Naive thymus-derived CD4-positive, alpha-beta T cell (primary cell): ENCODE measurements at regions of chr9 and their contacts with region 1.

Region 1: DNA sequence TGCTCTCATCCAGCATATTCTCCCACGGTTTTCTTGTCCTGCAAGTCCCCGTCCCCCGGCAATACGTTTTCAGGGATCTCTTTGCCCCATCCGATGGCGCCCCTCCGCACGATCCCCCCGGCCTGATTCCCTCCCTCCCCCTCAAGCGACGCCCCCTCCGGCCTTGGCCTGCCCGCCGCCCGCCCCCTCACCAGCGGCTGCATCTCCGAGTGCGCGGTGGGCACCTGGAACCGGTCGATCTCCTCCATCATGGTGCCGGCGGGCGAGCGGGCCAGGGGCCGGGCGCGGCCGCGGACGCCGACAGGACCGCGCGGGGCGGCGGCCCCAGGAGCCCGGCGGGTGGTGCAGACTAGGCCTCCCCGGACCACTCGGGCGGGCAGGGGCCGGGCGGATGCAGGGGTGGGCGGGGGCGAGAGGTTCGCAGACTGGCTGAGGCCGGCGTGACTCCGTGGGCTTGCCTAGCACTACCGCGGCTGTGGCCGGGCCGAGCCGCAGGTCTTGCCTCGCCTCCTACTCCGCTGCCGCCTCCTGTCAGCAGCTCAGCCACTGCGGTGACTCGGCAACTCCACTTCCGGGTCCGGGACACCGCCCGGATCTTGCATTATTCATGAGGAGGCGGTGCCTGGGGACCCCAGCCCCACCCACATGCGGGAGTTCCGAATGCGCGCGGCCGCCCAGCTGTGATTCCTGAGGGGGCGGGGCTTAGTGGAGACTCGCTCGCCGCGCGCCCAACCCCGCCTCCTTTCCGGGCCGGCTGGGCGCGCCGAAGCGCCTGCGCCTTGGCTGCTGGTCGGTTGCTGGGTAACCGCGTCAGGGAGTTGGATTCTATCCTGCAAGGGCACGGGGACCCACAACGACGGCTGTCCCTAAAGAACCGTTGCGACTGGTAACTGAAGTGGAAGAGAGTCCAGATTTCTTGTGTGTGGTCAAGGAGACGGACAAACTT is at the starts of genes DNAI1 and FAM219A:
- DNase-seq: peak; percentile 97 to 100 (median 99)
- ATAC-seq: peak; percentile 98
- H3K4me3 ChIP-seq: peak within 1 kb of the TSS; percentile 68
- H3K4me3 Mint-ChIP-seq: peak within 1 kb of the TSS; percentile 86 to 93 (median 92)
- H3K27ac ChIP-seq: peak within 1 kb of the TSS; percentile 41
- H3K27ac Mint-ChIP-seq: peak within 1 kb of the TSS; percentile 57 to 93 (median 82)
- H3K4me1 ChIP-seq: peaks cover 13 to 16% of the 10 kb centered on the region in 2 donors
- H3K4me1 Mint-ChIP-seq: peaks cover 28 to 46% (median 38%) of the 10 kb centered on the region in 7 donors
- H3K27me3 ChIP-seq: no peaks in the 10 kb centered on the region
- H3K27me3 Mint-ChIP-seq: peaks cover 0 to 23% (median 6%) of the 10 kb centered on the region in 5 donors
- total RNA-seq, gene DNAI1: not detected
- total RNA-seq, gene FAM219A: 12.3 to 14.6 (median 13.4) TPM

Region 2: DNA sequence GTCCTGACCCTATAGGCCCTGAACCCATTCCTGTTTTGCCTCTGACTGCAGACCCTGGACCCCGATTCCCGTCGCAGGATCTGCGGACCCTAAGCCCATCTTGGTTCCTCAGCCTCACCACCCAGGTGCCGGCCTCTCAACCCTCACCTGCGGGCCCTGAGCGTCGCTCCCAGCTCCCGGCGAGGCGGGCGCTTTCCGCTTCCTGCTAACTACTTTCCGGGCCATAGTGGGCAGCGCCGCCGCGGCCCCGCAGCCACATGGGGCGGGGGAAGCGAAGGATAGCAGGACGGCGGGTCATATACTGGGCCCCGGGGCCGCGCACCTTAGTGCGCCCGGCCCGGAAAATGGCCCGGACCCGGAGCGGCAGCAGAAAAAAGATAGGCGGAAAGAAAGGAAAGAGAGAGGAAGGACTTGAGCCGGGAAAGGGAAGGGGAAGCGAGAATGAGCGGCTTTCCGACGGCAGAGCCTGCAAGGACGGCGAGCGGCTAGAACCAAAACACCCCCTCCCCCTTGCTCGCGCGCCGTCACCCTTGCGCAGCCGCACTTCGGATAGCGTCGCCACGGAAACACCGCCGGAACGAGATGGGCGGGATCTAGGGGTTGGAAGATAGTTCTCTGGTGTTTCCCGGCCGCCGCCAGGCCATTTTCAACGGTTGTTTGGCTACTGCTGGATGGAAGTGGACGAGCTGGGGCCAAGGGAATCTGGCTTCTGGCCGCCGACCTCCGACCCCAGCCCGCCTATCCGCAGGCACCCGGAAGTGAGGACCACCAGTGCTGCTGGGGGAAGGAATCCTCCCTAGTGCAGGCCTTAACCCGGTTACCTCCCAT is 331.9 kb before region 1 on chr9 and contains the start of gene DCAF12:
- CTCF ChIA-PET with region 1: no interaction called
- POLR2A ChIA-PET with region 1: no interaction called
- intact Hi-C with region 1: loop called in 1 of 2 experiments (anchors 2 kb)
- DNase-seq: peak; percentile 84 to 92 (median 89)
- ATAC-seq: peak; percentile 96
- H3K4me3 ChIP-seq: peak within 1 kb of the TSS; percentile 92
- H3K4me3 Mint-ChIP-seq: peak within 1 kb of the TSS; percentile 92 to 99 (median 98)
- H3K27ac ChIP-seq: peak within 1 kb of the TSS; percentile 93
- H3K27ac Mint-ChIP-seq: peak within 1 kb of the TSS; percentile 94 to 99 (median 98)
- H3K4me1 ChIP-seq: peaks cover 24 to 34% of the 10 kb centered on the region in 2 donors
- H3K4me1 Mint-ChIP-seq: peaks cover 39 to 56% (median 44%) of the 10 kb centered on the region in 7 donors
- H3K27me3 ChIP-seq: no peaks in the 10 kb centered on the region
- H3K27me3 Mint-ChIP-seq: peaks cover 0 to 2% (median 0%) of the 10 kb centered on the region in 5 donors
- total RNA-seq, gene DCAF12: 10.8 to 40.4 (median 28.5) TPM

Region 3: DNA sequence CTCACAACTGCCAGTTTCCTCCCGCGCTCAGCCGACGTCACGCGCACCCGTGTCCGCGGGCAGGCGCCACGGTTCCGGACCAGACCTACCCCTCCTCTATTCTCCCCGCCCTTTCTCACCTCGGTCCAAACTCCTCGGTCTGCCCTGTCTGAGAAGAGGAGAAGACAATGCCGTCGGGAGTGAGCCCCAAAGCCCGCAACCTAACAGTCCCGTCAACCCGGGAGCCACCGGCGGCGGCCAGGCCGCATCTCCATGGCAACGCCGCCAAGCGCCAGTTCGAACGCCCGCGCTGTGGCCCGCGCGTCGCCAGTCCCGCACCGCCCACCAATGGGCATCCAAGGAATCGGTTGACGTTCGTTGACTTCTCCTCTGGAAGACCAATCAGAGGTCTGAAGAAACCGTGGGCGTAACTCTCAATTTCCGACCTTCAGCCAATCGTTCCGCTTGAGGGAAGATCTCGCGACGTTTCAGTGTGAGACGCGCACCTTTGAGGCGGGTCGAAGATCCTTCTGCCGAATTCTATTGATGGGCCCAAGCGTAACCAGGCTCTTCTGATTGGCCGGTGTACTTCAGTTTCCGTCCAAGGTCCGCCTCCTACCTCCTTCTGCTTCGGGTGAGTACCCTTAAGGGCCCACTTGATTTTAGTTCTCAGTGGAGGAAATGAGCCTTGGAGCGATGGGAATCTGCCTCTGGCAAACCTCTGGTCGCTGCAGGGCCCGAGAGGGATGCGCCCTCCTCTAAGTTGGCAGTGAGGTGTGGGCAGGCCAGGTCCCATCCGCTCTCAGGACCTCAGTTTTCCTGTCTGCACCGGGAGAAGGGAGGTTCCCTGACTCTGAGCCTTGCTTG is 129.1 kb before region 1 on chr9 and contains the starts of genes KIF24 and NUDT2:
- CTCF ChIA-PET with region 1: no interaction called
- POLR2A ChIA-PET with region 1: no interaction called
- intact Hi-C with region 1: loop called (anchors 1 kb)
- DNase-seq: peak; percentile 89 to 99 (median 96)
- ATAC-seq: peak; percentile 95
- H3K4me3 ChIP-seq: peak within 1 kb of the TSS; percentile 98
- H3K4me3 Mint-ChIP-seq: peak within 1 kb of the TSS; percentile 88 to 97 (median 94)
- H3K27ac ChIP-seq: peak within 1 kb of the TSS; percentile 94
- H3K27ac Mint-ChIP-seq: peak within 1 kb of the TSS; percentile 77 to 98 (median 95)
- H3K4me1 ChIP-seq: peaks cover 3 to 8% of the 10 kb centered on the region in 2 donors
- H3K4me1 Mint-ChIP-seq: peaks cover 11 to 45% (median 29%) of the 10 kb centered on the region in 7 donors
- H3K27me3 ChIP-seq: no peaks in the 10 kb centered on the region
- H3K27me3 Mint-ChIP-seq: no peaks in the 10 kb centered on the region
- total RNA-seq, gene KIF24: 0.11 to 6.0 (median 0.35) TPM
- total RNA-seq, gene NUDT2: 7.5 to 30.0 (median 22.7) TPM

Region 4: GRCh38 chr9:34396276-34397214 is 61.7 kb before region 1 on chr9:
- CTCF ChIA-PET with region 1: no interaction called
- POLR2A ChIA-PET with region 1: no interaction called
- intact Hi-C with region 1: no loop called
- DNase-seq: no peak
- ATAC-seq: no peak
- H3K4me3 ChIP-seq: no peak overlapping the region
- H3K4me3 Mint-ChIP-seq: no peak overlapping the region
- H3K27ac ChIP-seq: no peak overlapping the region
- H3K27ac Mint-ChIP-seq: no peak overlapping the region
- H3K4me1 ChIP-seq: no peaks in the 10 kb centered on the region
- H3K4me1 Mint-ChIP-seq: no peaks in the 10 kb centered on the region
- H3K27me3 ChIP-seq: no peaks in the 10 kb centered on the region
- H3K27me3 Mint-ChIP-seq: peaks cover 0 to 15% (median 0%) of the 10 kb centered on the region in 5 donors

Region 5: GRCh38 chr9:34437006-34437925 is 21.0 kb before region 1 on chr9:
- CTCF ChIA-PET with region 1: interaction called, 7 read pairs
- POLR2A ChIA-PET with region 1: no interaction called
- intact Hi-C with region 1: loop called in 1 of 2 experiments (anchors 1 kb)
- DNase-seq: peak in 8 of 9 donors; percentile 49 to 74 (median 65)
- ATAC-seq: peak; percentile 92
- H3K4me3 ChIP-seq: no peak overlapping the region
- H3K4me3 Mint-ChIP-seq: no peak overlapping the region
- H3K27ac ChIP-seq: no peak overlapping the region
- H3K27ac Mint-ChIP-seq: no peak overlapping the region
- H3K4me1 ChIP-seq: peaks cover 0 to 6% of the 10 kb centered on the region in 2 donors
- H3K4me1 Mint-ChIP-seq: peaks cover 6 to 26% (median 17%) of the 10 kb centered on the region in 7 donors
- H3K27me3 ChIP-seq: no peaks in the 10 kb centered on the region
- H3K27me3 Mint-ChIP-seq: no peaks in the 10 kb centered on the region

Region 6: GRCh38 chr9:34591248-34591916 is 133.1 kb after region 1 on chr9:
- CTCF ChIA-PET with region 1: no interaction called
- POLR2A ChIA-PET with region 1: no interaction called
- intact Hi-C with region 1: loop called in 1 of 2 experiments (anchors 5 kb)
- DNase-seq: peak; percentile 48 to 85 (median 70)
- ATAC-seq: peak; percentile 85
- H3K4me3 ChIP-seq: peak overlapping the region; percentile 71
- H3K4me3 Mint-ChIP-seq: peak overlapping the region; percentile 28 to 91 (median 81)
- H3K27ac ChIP-seq: no peak overlapping the region
- H3K27ac Mint-ChIP-seq: no peak overlapping the region
- H3K4me1 ChIP-seq: peaks cover 0 to 13% of the 10 kb centered on the region in 2 donors
- H3K4me1 Mint-ChIP-seq: peaks cover 10 to 31% (median 28%) of the 10 kb centered on the region in 7 donors
- H3K27me3 ChIP-seq: peaks cover 4 to 17% of the 10 kb centered on the region in 2 donors
- H3K27me3 Mint-ChIP-seq: peaks cover 55 to 78% (median 66%) of the 10 kb centered on the region in 5 donors

Region 7: DNA sequence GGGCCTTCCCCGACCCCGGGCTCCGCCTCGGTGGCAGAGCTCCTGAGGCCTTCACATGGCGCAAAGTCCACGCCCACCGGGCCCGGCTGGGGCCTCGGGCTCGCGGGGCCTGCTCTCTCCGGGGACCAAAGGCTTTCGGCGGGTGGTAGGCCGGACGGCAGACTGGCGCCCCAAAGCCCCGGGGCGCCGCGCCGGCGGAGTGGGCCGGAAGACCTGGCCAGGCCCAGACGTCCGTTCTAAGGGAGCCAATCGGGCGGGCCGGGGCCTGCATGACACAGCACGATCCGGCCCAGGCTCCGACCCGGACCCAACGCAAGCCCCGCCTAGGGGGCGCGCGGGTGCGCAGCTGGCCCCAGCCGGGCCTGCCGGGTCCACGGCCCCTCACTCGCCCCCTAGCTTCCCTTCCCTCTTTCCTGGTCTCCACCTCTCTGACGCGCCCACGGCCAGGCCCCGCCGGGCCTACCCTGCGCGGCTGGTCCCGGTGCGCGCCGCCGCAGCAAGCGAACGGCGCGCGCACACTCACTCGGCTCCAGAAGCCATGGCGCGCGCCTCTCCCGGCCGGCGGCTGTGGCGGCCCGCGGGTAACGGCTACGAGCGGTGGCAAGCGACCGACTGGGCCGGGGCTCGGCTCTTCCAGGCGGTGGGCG is 613.7 kb after region 1 on chr9:
- CTCF ChIA-PET with region 1: no interaction called
- POLR2A ChIA-PET with region 1: no interaction called
- intact Hi-C with region 1: loop called in 1 of 2 experiments (anchors 1 kb)
- DNase-seq: peak in 8 of 9 donors; percentile 67 to 83 (median 71)
- ATAC-seq: peak; percentile 70
- H3K4me3 ChIP-seq: peak overlapping the region; percentile 53
- H3K4me3 Mint-ChIP-seq: peak overlapping the region; percentile 74 to 95 (median 88)
- H3K27ac ChIP-seq: peak overlapping the region; percentile 93
- H3K27ac Mint-ChIP-seq: peak overlapping the region; percentile 81 to 96 (median 91)
- H3K4me1 ChIP-seq: peaks cover 22 to 43% of the 10 kb centered on the region in 2 donors
- H3K4me1 Mint-ChIP-seq: peaks cover 34 to 66% (median 53%) of the 10 kb centered on the region in 7 donors
- H3K27me3 ChIP-seq: no peaks in the 10 kb centered on the region
- H3K27me3 Mint-ChIP-seq: peaks cover 0 to 3% (median 0%) of the 10 kb centered on the region in 5 donors